Activated naive CD4-positive, alpha-beta T cell treated with anti-CD3 and anti-CD28 coated beads for 36 hours (primary cell): ENCODE measurements at regions of chr2 and their contacts with region 1.

Region 1: GRCh38 chr2:199850718-199851500 is at the start of gene FTCDNL1:
- DNase-seq: peak; percentile 67
- H3K4me3 Mint-ChIP-seq: peak within 1 kb of the TSS; percentile 96
- H3K27ac Mint-ChIP-seq: peak within 1 kb of the TSS; percentile 88
- H3K4me1 Mint-ChIP-seq: peaks cover 9% of the 10 kb centered on the region
- H3K27me3 Mint-ChIP-seq: no peaks in the 10 kb centered on the region
- total RNA-seq, gene FTCDNL1: 3.8 to 5.2 TPM

Region 2: GRCh38 chr2:199869227-199869541 is 18.3 kb after region 1 on chr2:
- CTCF ChIA-PET with region 1: no interaction called
- intact Hi-C with region 1: no loop called
- DNase-seq: no peak
- H3K4me3 Mint-ChIP-seq: no peak overlapping the region
- H3K27ac Mint-ChIP-seq: no peak overlapping the region
- H3K4me1 Mint-ChIP-seq: no peaks in the 10 kb centered on the region
- H3K27me3 Mint-ChIP-seq: no peaks in the 10 kb centered on the region

Region 3: GRCh38 chr2:199940373-199940772 is 89.5 kb after region 1 on chr2:
- CTCF ChIA-PET with region 1: interaction called, 3 read pairs
- intact Hi-C with region 1: loop called (anchors 1 kb)
- DNase-seq: no peak
- H3K4me3 Mint-ChIP-seq: no peak overlapping the region
- H3K27ac Mint-ChIP-seq: no peak overlapping the region
- H3K4me1 Mint-ChIP-seq: peaks cover 6% of the 10 kb centered on the region
- H3K27me3 Mint-ChIP-seq: no peaks in the 10 kb centered on the region

Region 4: GRCh38 chr2:199955339-199956261 is 104.7 kb after region 1 on chr2 and contains the starts of genes MAIP1 and TYW5:
- CTCF ChIA-PET with region 1: no interaction called
- intact Hi-C with region 1: loop called (anchors 5 kb)
- DNase-seq: peak; percentile 82
- H3K4me3 Mint-ChIP-seq: peak within 1 kb of the TSS; percentile 98
- H3K27ac Mint-ChIP-seq: peak within 1 kb of the TSS; percentile 92
- H3K4me1 Mint-ChIP-seq: peaks cover 45% of the 10 kb centered on the region
- H3K27me3 Mint-ChIP-seq: no peaks in the 10 kb centered on the region
- total RNA-seq, gene MAIP1: 28.6 to 30.0 TPM
- total RNA-seq, gene TYW5: 7.8 to 7.9 TPM